ENCODE measurements at regions of chr15 and their contacts with region 1.

Region 1: GRCh38 chr15:59656897-59657634 is at the start of gene GTF2A2:
- DNase-seq: peak; percentile 82 to 96 (median 93)
- ATAC-seq: peak; percentile 99
- H3K4me3 ChIP-seq: peak within 1 kb of the TSS; percentile 82 to 85
- H3K4me3 Mint-ChIP-seq: peak within 1 kb of the TSS; percentile 51
- H3K27ac ChIP-seq: peak within 1 kb of the TSS; percentile 72 to 87
- H3K27ac Mint-ChIP-seq: peak within 1 kb of the TSS; percentile 83
- H3K4me1 ChIP-seq: peaks cover 24% of the 10 kb centered on the region
- H3K4me1 Mint-ChIP-seq: peaks cover 13% of the 10 kb centered on the region
- H3K27me3 ChIP-seq: no peaks in the 10 kb centered on the region
- H3K27me3 Mint-ChIP-seq: no peaks in the 10 kb centered on the region
- CTCF ChIP-seq: no peak
- total RNA-seq, gene GTF2A2: 62.7 to 63.6 TPM

Region 2: DNA sequence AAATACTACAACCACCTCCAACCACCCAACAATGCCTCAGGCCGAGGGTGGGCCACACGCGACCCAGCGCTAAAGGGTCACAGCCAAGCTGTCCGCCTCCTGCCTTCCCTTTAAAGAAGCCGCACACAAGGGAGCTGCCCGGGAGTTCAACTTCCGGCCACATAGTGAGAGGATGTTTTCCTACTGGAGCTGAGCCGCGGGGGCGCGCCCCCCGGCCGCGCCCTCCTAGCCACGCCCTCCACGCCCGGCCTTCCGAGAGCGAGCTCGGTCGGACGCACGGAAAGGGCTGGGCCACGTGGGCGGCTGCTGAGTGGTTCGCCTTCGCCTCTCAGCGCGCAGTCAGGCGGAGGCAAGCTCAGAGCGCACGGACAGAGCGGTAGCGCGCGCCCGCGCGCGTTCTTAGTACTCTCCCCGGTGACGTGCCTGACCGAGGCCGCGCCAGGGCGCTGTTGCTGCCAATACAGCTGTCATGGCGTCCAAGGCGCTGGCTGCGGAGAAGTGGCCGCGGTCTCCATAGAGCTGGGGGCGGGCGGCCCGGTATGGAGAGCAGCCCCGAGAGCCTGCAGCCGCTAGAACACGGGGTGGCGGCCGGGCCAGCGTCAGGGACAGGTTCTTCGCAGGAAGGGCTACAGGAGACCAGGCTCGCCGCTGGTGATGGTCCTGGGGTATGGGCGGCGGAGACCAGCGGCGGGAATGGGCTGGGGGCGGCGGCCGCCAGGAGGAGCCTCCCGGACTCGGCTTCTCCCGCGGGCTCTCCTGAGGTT is 886.0 kb before region 1 on chr15 and contains the start of gene MINDY2:
- CTCF ChIA-PET with region 1: no interaction called
- POLR2A ChIA-PET with region 1: no interaction called
- intact Hi-C with region 1: loop called in 1 of 2 experiments (anchors 10 kb)
- DNase-seq: peak; percentile 83 to 97 (median 94)
- ATAC-seq: peak; percentile 94
- H3K4me3 ChIP-seq: peak within 1 kb of the TSS; percentile 98
- H3K4me3 Mint-ChIP-seq: peak within 1 kb of the TSS; percentile 92
- H3K27ac ChIP-seq: peak within 1 kb of the TSS; percentile 86 to 89
- H3K27ac Mint-ChIP-seq: peak within 1 kb of the TSS; percentile 94
- H3K4me1 ChIP-seq: peaks cover 34% of the 10 kb centered on the region
- H3K4me1 Mint-ChIP-seq: peaks cover 22% of the 10 kb centered on the region
- H3K27me3 ChIP-seq: no peaks in the 10 kb centered on the region
- H3K27me3 Mint-ChIP-seq: no peaks in the 10 kb centered on the region
- CTCF ChIP-seq: no peak
- total RNA-seq, gene MINDY2: 4.7 to 4.9 TPM

Region 3: DNA sequence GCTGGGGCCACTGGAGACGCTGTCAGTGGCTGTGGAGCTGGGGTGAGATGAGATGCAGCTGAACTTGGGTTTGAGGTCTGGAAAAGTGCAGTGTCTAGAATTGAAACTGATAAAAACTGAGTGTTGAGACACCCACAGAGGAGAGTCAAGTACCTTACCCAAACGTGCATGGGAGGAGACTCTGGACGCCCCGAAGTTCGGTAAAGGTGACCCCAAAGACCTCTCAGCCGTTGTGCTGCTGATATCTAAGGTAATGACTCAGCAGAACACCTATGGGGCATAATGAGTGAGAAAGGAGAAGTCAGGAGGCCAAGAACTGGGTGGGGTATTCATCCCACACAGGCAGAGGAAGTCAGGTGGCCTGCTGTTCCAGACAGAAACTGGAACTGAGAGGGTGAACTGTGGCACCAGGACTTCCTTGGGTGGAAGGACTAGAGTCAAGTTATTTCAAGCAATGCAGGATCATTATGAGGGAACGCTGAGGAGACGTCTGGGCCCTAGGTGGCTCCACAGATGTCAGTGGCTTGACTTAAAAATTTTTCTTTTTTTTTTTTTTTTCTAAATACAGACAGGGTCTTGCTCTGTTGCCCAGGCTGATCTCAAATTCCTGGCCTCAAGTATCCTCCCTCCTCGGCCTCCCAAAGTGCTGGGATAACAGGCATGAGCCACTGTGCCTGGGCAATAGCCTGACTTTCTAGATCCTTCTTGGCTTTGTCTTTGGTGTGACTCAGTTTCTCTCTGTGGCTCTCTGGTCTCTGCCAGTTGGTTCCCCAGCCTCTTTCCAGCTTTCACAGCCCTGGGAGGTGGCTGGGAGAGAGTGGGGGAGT is 113.1 kb before region 1 on chr15:
- CTCF ChIA-PET with region 1: no interaction called
- POLR2A ChIA-PET with region 1: no interaction called
- intact Hi-C with region 1: no loop called
- DNase-seq: no peak
- ATAC-seq: no peak
- H3K4me3 ChIP-seq: no peak overlapping the region
- H3K4me3 Mint-ChIP-seq: no peak overlapping the region
- H3K27ac ChIP-seq: no peak overlapping the region
- H3K27ac Mint-ChIP-seq: no peak overlapping the region
- H3K4me1 ChIP-seq: no peaks in the 10 kb centered on the region
- H3K4me1 Mint-ChIP-seq: peaks cover 5% of the 10 kb centered on the region
- H3K27me3 ChIP-seq: no peaks in the 10 kb centered on the region
- H3K27me3 Mint-ChIP-seq: peaks cover 14% of the 10 kb centered on the region
- CTCF ChIP-seq: no peak